ENCODE measurements at regions of chr7 and their contacts with region 1.

Region 1: GRCh38 chr7:129367700-129368388 is 66.4 kb upstream of the STRIP2 start:
- DNase-seq: peak; percentile 71 to 77
- H3K4me3 ChIP-seq: no peak overlapping the region
- H3K4me3 Mint-ChIP-seq: peak overlapping the region; percentile 44
- H3K27ac Mint-ChIP-seq: no peak overlapping the region
- H3K4me1 ChIP-seq: no peaks in the 10 kb centered on the region
- H3K4me1 Mint-ChIP-seq: peaks cover 13% of the 10 kb centered on the region
- H3K27me3 ChIP-seq: no peaks in the 10 kb centered on the region
- H3K27me3 Mint-ChIP-seq: no peaks in the 10 kb centered on the region
- CTCF ChIP-seq: peak; percentile 88 to 94

Region 2: GRCh38 chr7:129218514-129219062 is 149.3 kb before region 1 on chr7:
- CTCF ChIA-PET with region 1: interaction called, 12 read pairs
- POLR2A ChIA-PET with region 1: no interaction called
- intact Hi-C with region 1: loop called (anchors 1 kb)
- DNase-seq: peak; percentile 80 to 89
- H3K4me3 ChIP-seq: no peak overlapping the region
- H3K4me3 Mint-ChIP-seq: no peak overlapping the region
- H3K27ac Mint-ChIP-seq: no peak overlapping the region
- H3K4me1 ChIP-seq: 0 out of 2 replicates have a peak, but pooled peaks cover 1% of the 10 kb centered on the region
- H3K4me1 Mint-ChIP-seq: peaks cover 8% of the 10 kb centered on the region
- H3K27me3 ChIP-seq: no peaks in the 10 kb centered on the region
- H3K27me3 Mint-ChIP-seq: no peaks in the 10 kb centered on the region
- CTCF ChIP-seq: peak; percentile 91

Region 3: GRCh38 chr7:129468087-129468486 is 100.2 kb after region 1 on chr7:
- CTCF ChIA-PET with region 1: interaction called, 4 read pairs
- POLR2A ChIA-PET with region 1: no interaction called
- intact Hi-C with region 1: loop called (anchors 1 kb)
- DNase-seq: no peak
- H3K4me3 ChIP-seq: no peak overlapping the region
- H3K4me3 Mint-ChIP-seq: no peak overlapping the region
- H3K27ac Mint-ChIP-seq: no peak overlapping the region
- H3K4me1 ChIP-seq: no peaks in the 10 kb centered on the region
- H3K4me1 Mint-ChIP-seq: no peaks in the 10 kb centered on the region
- H3K27me3 ChIP-seq: no peaks in the 10 kb centered on the region
- H3K27me3 Mint-ChIP-seq: no peaks in the 10 kb centered on the region
- CTCF ChIP-seq: no peak

Region 4: DNA sequence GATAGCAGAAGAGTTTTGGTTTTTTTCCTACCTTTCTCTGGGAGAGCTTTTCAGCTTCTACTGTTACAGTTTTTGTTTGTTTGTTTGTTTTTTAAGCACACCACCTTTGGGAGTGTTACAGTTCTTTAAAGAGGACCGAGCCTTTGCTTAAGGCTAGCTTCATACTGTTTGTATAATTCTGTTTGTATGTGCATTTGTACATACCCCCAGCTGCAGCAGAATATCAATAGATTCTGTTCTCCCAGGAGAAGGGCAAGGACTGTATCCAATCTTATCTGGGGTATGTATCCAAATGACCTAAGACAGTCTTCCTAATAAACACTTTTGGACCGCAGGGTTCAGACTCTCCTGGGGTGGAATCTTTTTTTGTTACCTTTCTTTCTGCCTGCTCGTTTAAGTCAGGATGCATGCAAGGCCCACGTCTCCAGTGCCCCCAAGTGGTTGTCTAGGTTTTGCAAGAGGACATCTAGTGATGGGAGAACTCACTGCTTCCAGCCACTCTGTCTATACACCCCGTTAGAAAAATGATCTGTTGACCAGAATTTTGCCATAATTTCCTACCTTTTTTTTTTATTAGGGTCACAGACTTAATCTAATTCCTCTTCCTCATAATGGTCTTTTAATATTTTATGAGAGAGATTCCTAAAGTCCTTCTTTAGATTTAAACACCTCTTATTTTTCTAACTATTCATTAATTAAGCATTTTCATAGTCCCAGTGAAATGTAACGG is 267.6 kb after region 1 on chr7:
- CTCF ChIA-PET with region 1: no interaction called
- POLR2A ChIA-PET with region 1: no interaction called
- intact Hi-C with region 1: loop called (anchors 2 kb)
- DNase-seq: peak; percentile 79
- H3K4me3 ChIP-seq: no peak overlapping the region
- H3K4me3 Mint-ChIP-seq: no peak overlapping the region
- H3K27ac Mint-ChIP-seq: no peak overlapping the region
- H3K4me1 ChIP-seq: 0 out of 2 replicates have a peak, but pooled peaks cover 6% of the 10 kb centered on the region
- H3K4me1 Mint-ChIP-seq: no peaks in the 10 kb centered on the region
- H3K27me3 ChIP-seq: no peaks in the 10 kb centered on the region
- H3K27me3 Mint-ChIP-seq: no peaks in the 10 kb centered on the region
- CTCF ChIP-seq: peak; percentile 86 to 92

Region 5: GRCh38 chr7:129825496-129826267 is 457.8 kb after region 1 on chr7:
- CTCF ChIA-PET with region 1: interaction called, 6 read pairs
- POLR2A ChIA-PET with region 1: no interaction called
- intact Hi-C with region 1: loop called (anchors 10 kb)
- DNase-seq: peak; percentile 90 to 95
- H3K4me3 ChIP-seq: peak overlapping the region; percentile 82
- H3K4me3 Mint-ChIP-seq: peak overlapping the region; percentile 89
- H3K27ac Mint-ChIP-seq: peak overlapping the region; percentile 86
- H3K4me1 ChIP-seq: peaks cover 17% of the 10 kb centered on the region
- H3K4me1 Mint-ChIP-seq: peaks cover 4% of the 10 kb centered on the region
- H3K27me3 ChIP-seq: no peaks in the 10 kb centered on the region
- H3K27me3 Mint-ChIP-seq: no peaks in the 10 kb centered on the region
- CTCF ChIP-seq: peak; percentile 74 to 94